ENCODE measurements at regions of chr19 and their contacts with region 1.

Region 1: GRCh38 chr19:58466760-58467589 is at the start of gene ZNF324:
- DNase-seq: peak; percentile 98 to 100 (median 100)

Region 2: DNA sequence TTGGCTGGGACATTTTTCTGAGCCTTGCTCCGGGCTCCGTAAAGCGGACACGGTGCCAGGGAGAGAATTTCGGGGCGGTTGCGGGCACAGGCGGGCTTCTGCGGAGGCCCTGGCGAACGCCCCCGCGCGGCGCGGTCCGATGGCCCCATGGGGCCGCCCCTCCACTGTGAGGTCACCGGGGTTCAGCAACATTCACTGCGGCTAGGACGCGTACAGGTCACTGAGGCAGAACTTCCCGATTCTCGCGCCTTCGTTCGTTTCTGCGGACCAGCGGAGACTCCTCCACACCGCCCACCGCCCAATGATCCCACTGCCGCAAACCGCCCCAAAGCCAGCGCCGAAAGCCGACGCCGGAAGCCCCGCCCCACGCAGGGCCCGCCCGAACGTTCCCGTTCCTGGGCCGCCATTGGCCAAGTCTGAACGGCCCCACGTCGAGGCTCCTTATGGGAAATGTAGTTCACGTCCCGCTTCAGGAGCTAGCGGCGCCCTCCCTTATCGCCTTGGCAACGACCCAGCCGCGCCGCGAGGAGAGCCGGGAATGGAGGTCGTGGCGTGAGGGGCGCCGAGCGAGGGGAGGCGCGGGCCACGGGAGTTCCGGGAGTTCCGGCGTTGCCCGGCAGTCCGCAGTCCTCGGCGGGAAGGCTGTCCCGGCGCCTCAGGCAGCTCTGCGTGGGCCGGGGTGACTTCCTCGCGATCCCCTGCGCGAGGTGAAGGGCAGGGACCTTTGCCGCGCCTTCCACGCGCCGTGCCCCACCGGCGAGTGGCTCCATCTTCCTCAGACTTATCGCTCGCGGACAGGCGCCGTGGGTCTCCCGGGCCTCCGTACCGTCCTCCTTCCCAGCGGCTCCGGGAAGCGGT is 58.6 kb before region 1 on chr19 and contains the start of gene ZNF584:
- intact Hi-C with region 1: loop called (anchors 2 kb)
- DNase-seq: peak; percentile 94 to 100 (median 97)

Region 3: DNA sequence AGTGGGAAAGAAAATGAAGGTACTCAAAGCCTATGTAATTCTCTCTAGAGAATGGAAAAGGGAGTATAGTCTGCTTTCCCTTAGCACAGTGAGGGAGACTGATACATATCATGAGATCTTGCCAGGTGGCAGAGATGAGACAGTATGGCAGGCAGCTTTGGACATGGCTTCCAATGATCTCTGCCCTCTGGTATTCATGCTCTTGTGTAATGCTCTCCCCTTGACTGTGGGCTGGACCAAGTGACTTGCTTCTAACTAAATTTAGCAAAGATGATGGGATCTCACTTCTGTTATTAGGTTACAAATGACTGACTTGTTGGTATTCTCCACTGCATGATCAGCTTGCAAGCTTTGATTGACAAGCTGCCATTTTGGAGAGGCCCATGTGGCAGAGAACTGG is 37.2 kb before region 1 on chr19:
- intact Hi-C with region 1: no loop called
- DNase-seq: no peak

Region 4: DNA sequence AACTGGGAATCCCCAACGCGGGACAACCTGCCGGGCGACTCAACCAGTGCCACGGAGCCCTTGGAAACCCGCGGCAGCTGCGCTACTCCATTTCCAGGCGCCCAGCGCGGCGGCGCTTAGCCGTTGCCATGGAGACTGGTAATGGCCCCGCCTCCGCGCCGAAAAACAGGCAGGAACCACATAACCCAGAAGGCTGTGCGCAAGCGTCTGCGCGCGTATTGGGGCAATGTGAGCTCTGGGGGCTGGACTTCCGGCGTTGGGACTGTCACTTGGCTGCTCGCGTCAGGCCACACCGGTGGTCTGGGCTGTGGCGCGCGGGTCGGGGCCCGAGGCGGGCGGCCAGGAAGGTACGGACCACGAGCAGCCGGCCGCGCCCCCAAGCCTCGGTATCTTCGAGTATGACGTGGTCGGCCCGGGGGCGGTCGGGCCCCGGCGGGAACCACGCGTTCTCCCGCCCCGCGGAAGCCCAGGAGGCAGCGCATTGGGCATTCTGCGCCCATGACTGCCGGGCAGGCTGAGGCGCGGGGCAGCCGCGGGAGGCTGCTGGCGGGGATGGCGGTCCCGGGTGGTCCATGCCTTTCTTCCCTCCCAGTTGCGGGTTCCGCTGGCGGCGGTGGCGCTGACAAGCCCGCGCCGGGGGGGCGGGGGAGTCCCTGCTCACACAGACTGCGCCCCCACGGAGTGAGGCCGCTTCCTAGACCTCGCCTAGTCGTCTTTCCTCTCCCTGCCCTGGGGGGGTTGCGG is 15.4 kb before region 1 on chr19 and contains the start of gene ZNF324B:
- intact Hi-C with region 1: loop called (anchors 2 kb)
- DNase-seq: peak; percentile 95 to 100 (median 98)